ENCODE measurements at regions of chr2 and their contacts with region 1.

Region 1: DNA sequence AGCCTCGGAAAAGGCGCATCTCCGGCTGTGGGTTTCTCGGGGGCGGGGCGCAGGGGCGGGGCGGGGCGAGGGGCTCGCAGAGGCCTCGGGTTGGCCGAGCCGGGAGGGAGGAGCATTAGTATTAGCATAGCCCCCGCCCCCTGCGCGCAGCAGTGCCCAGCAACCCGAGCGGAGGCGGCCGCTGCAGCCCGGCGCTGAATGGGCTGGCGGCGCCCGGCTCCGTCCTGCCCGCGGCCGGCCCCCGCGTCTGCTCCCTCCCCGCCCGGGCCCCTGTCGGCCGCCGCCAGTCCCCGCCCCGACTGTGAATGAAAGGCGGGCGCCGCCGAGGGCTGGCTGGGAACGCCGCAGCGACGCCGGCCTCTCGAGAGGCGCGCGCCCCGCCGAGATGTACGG is at the start of gene EFR3B:
- DNase-seq: peak; percentile 92
- H3K4me3 Mint-ChIP-seq: peak within 1 kb of the TSS; percentile 77
- H3K27ac Mint-ChIP-seq: no peak within 1 kb of the TSS
- H3K4me1 Mint-ChIP-seq: peaks cover 29% of the 10 kb centered on the region
- H3K27me3 Mint-ChIP-seq: peaks cover 36% of the 10 kb centered on the region
- total RNA-seq, gene EFR3B: 0.41 to 0.42 TPM

Region 2: DNA sequence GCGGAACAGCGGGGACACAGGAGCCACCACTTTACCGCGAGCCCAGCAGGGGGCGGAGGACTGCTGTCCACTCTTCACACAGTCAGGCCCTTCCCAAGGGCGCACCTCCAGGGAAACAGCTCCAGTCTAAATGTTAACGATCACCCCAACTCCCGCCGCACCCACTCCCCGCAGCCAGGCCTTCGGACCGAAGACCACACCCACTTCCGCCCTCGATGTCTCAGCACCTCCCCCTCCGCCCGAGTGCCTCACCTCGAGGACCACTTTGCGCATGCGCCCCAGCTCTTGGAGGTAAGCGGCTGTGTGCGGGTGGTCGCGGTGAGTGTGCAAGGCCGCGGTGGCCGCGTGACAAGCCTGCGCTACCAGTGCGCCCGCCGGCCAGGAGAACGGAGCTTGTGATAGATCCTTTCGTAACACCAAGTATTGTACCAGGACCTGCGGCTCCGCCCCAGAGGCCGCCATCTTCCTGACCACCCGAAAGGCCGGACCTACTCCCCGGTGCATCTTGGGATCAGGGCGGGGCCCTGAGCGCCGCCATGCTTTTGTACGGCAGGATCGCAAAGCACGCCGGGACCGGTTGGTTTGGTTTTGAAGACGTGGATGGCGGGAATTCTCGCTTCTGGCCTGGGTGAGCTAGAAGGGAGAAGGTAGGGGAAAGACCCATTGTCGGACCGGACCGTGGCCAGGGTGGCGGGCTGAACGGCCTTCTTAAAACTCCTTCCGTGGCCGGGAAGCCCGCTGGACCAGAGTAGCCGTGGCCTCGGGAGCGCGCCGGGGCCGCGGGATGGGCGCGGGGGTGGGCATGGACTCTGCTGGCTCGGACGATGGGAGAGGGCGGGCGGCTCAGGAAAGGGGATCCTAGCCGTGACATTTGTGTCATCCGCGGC is 248.8 kb before region 1 on chr2 and contains the starts of genes CENPO and PTRHD1:
- CTCF ChIA-PET with region 1: no interaction called
- intact Hi-C with region 1: loop called (anchors 2 kb)
- DNase-seq: peak; percentile 97
- H3K4me3 Mint-ChIP-seq: peak within 1 kb of the TSS; percentile 97
- H3K27ac Mint-ChIP-seq: peak within 1 kb of the TSS; percentile 99
- H3K4me1 Mint-ChIP-seq: peaks cover 40% of the 10 kb centered on the region
- H3K27me3 Mint-ChIP-seq: no peaks in the 10 kb centered on the region
- total RNA-seq, gene CENPO: 36.4 to 38.5 TPM
- total RNA-seq, gene PTRHD1: 21.7 to 23.5 TPM

Region 3: GRCh38 chr2:24920098-24920808 is 121.7 kb before region 1 on chr2 and contains the start of gene ADCY3:
- CTCF ChIA-PET with region 1: no interaction called
- intact Hi-C with region 1: loop called (anchors 1 kb)
- DNase-seq: peak; percentile 64
- H3K4me3 Mint-ChIP-seq: peak within 1 kb of the TSS; percentile 95
- H3K27ac Mint-ChIP-seq: peak within 1 kb of the TSS; percentile 86
- H3K4me1 Mint-ChIP-seq: peaks cover 30% of the 10 kb centered on the region
- H3K27me3 Mint-ChIP-seq: no peaks in the 10 kb centered on the region
- total RNA-seq, gene ADCY3: 44.8 to 49.9 TPM

Region 4: DNA sequence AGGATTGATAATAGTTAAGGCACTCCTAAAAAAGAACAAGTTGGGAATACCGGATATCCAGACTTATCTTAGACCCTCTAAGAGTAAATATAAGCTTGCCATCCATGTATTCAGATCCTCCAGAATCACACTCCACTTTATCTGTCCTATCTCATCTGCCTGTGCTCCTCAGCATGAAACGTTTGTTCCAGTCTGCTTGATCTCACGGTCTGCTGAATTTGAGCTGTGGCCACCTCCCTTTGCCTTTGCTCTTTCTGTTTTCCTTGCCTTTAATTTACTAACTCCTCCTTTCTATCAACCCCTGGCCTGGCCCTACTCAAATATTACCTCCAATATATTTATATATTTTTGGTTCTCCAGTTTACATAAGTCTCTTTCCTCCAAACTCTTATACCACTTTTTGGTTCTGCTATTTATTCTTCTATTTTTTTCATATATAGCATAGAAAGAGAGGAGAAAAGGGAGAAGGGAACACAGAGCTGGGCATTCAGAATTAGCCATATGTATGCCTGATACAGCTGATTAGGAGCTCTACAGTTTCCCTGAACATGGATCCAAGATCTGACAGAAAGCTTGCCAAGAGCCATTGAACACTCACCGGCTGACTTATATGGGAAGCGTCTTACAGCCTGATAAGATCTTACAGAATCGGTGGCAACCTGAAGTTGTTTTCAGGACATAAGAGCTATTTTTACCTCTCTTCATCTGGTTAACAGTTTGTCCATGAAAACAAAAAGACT is 48.3 kb before region 1 on chr2:
- CTCF ChIA-PET with region 1: no interaction called
- intact Hi-C with region 1: no loop called
- DNase-seq: no peak
- H3K4me3 Mint-ChIP-seq: no peak overlapping the region
- H3K27ac Mint-ChIP-seq: no peak overlapping the region
- H3K4me1 Mint-ChIP-seq: peaks cover 5% of the 10 kb centered on the region
- H3K27me3 Mint-ChIP-seq: peaks cover 7% of the 10 kb centered on the region

Region 5: DNA sequence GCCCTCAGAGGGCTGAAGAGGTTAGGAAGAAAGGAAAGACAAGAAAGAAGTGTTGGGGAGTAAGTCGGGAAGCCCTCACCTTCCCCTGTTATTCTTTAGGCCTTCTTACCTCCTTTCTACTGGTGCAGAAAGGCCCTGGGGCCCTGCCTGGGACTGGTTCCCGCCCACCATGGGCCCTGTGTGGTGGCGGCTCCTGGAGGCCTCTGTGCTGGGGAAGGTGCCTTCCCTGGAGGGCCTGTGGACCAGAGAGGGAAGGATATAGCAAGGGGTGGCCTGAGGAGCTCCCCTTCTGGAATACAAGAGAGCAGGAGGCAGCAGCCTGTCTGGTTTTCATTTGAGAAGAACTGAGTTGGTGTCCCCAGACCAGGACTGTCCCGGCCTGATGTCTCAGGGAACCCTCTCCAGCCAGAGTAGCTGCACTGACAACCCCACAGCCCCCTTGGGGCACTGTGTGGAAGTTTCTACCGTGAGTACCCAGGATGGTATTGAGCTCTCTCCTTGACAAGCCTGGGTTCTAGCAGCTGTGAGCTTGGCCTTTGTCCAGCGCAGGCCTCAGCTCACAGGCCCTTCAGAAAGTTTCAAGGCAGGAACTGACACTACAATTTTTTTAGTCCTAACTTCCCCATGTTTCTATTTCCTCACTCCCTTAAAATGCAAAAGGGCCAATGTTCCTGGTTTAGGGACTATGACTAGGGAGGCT is 47.0 kb after region 1 on chr2:
- CTCF ChIA-PET with region 1: no interaction called
- intact Hi-C with region 1: no loop called
- DNase-seq: no peak
- H3K4me3 Mint-ChIP-seq: no peak overlapping the region
- H3K27ac Mint-ChIP-seq: no peak overlapping the region
- H3K4me1 Mint-ChIP-seq: no peaks in the 10 kb centered on the region
- H3K27me3 Mint-ChIP-seq: no peaks in the 10 kb centered on the region

Region 6: GRCh38 chr2:25104736-25105135 is 62.8 kb after region 1 on chr2:
- CTCF ChIA-PET with region 1: no interaction called
- intact Hi-C with region 1: loop called (anchors 2 kb)
- DNase-seq: no peak
- H3K4me3 Mint-ChIP-seq: no peak overlapping the region
- H3K27ac Mint-ChIP-seq: no peak overlapping the region
- H3K4me1 Mint-ChIP-seq: peaks cover 24% of the 10 kb centered on the region
- H3K27me3 Mint-ChIP-seq: no peaks in the 10 kb centered on the region

Region 7: DNA sequence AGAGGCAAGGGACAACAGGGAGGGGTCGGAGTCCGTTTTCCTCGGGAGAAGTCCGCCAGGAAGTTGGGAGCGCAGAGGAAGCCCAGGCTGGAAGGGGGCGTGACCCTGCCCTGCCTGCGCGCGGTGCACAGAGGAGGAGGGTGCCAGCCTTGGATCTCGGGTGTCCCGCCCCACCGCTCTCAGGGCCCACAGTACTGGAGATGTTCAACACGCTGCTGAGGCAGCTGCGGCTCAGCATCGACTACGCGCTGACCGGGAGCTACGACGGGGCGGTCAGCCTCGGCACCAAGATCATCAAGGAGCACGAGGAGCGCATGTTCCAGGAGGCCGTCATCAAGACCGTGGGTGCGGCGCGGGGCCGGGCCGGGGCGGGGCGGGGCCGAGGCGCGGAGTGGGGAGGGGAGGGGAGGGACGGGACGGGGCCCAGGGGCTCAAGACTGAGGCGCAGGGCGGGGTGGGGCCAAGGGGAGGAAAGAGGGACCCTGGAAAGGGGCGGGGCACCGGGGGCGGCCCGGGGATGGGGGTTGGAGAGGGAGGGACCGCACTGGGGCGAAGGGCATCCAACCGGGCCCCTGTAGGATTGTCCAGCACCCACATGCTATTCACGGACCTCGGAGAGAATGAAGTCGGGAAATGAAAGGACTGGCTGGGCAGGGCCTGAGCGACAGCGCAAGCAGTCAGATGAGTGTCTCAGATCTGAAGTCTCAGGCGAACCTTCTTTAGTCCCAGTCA is 89.8 kb after region 1 on chr2:
- CTCF ChIA-PET with region 1: interaction called, 3 read pairs
- intact Hi-C with region 1: loop called (anchors 1 kb)
- DNase-seq: peak; percentile 11
- H3K4me3 Mint-ChIP-seq: peak overlapping the region; percentile 60
- H3K27ac Mint-ChIP-seq: peak overlapping the region; percentile 39
- H3K4me1 Mint-ChIP-seq: peaks cover 10% of the 10 kb centered on the region
- H3K27me3 Mint-ChIP-seq: peaks cover 48% of the 10 kb centered on the region

Region 8: DNA sequence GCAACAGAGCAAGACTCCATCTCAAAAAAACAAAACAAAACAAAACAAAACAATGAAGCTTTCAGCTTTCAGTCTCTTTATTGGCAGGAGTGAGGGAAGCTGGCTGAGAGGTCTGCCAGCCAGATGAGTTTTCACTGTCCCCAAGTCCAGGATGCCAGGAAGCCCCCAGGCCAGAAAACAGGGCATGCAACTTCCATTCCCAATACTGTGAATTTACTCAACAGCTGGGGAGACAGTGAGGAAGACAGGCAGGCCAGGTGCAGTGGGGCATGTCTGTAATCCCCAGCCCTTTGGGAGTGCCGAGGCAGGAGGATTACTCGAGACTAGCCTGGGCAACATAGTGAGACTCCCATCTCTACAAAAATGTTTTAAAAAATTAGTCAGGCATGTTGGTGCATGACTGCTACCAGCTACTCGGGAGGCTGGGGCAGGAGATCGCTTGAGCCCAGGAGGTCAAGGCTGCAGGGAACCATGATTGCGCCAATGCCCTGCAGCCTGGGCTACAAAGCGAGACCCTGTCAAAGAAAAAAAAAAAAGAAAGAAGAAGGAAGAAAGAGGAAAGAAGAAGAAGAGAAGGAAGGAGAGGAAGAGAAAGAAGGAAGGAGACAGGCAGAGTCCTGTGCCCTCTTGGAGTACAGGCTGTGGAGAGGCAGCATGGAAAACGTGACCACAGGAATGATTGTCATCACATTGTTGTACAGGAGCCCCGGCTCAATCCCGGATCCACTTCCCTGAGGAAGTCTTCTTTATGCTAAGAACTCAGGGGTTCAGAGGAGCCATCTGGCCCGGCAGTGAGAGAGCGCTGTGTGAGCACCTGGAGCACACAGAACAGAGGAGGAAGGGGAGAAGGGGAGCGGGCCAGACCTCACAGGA is 155.6 kb after region 1 on chr2:
- CTCF ChIA-PET with region 1: no interaction called
- intact Hi-C with region 1: loop called (anchors 5 kb)
- DNase-seq: no peak
- H3K4me3 Mint-ChIP-seq: no peak overlapping the region
- H3K27ac Mint-ChIP-seq: no peak overlapping the region
- H3K4me1 Mint-ChIP-seq: peaks cover 6% of the 10 kb centered on the region
- H3K27me3 Mint-ChIP-seq: no peaks in the 10 kb centered on the region

Region 9: DNA sequence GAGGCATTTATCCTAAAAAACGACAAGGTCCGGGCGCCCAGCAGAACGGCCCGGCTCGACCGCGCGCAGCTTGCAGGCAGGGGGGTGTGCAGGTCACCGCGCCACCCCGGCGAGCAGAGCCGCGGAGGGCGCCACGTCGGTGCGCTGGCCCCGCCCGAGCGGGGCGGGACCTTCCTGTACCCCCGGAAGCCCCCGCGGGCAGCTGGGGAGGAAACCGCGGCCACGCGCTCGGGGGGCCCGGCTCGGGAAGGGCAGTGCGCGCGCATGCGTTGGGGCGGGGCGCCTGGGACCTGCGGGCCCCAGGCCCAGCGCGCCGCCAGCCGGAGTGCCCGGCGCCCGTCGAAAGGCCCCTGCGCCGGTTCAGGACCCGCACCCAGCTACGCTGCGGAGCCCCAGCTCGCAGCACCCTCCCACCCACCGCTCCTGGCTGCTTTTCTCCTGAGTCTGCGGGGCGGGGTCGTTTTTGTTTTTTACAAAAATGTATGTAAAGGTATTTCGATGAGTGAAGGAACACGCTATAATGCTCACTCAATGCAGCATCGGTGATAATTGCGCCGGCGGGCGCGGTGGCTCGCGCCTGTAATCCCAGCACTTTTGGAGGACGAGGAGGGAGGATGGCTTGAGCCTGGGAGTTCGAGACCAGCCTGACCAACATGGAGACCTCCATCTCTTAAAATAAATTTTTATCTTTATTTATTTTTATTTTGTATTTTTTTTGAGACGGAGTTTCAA is 174.2 kb after region 1 on chr2:
- CTCF ChIA-PET with region 1: no interaction called
- intact Hi-C with region 1: loop called (anchors 2 kb)
- DNase-seq: peak; percentile 82
- H3K4me3 Mint-ChIP-seq: peak overlapping the region; percentile 76
- H3K27ac Mint-ChIP-seq: peak overlapping the region; percentile 47
- H3K4me1 Mint-ChIP-seq: peaks cover 4% of the 10 kb centered on the region
- H3K27me3 Mint-ChIP-seq: no peaks in the 10 kb centered on the region

Region 10: DNA sequence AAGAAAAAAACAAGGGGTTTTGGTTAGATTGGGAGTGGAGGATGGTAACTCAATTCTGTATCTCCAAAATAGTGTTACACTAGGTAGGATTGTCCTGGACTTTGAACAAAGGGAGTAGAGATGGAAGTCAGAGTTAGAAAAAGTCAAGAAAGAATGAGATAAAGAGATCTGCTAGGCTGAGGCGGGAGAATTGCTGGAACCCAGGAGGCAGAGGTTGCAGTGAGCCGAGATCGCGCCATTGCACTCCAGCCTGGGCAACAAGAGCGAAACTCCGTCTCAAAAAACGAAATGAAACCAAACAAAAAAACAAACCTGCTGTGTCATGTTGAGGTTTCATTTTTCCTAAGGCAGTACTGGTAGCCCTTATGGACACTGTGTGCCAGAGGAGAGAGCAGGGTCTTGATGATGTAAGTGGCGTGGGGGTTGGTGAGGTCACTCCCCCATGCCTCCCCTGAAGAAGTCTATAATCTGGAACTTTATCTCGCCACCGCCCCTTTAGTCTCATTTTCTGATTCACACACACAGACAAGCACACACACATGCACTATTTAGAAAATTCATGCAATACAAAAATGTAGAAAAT is 1370.3 kb after region 1 on chr2:
- CTCF ChIA-PET with region 1: no interaction called
- intact Hi-C with region 1: no loop called
- DNase-seq: peak; percentile 10
- H3K4me3 Mint-ChIP-seq: peak overlapping the region; percentile 28
- H3K27ac Mint-ChIP-seq: no peak overlapping the region
- H3K4me1 Mint-ChIP-seq: peaks cover 9% of the 10 kb centered on the region
- H3K27me3 Mint-ChIP-seq: peaks cover 8% of the 10 kb centered on the region

Measured in activated naive CD4-positive, alpha-beta T cell treated with anti-CD3 and anti-CD28 coated beads for 36 hours (primary cell).